ENCODE measurements at regions of chr4 and their contacts with region 1.

Region 1: DNA sequence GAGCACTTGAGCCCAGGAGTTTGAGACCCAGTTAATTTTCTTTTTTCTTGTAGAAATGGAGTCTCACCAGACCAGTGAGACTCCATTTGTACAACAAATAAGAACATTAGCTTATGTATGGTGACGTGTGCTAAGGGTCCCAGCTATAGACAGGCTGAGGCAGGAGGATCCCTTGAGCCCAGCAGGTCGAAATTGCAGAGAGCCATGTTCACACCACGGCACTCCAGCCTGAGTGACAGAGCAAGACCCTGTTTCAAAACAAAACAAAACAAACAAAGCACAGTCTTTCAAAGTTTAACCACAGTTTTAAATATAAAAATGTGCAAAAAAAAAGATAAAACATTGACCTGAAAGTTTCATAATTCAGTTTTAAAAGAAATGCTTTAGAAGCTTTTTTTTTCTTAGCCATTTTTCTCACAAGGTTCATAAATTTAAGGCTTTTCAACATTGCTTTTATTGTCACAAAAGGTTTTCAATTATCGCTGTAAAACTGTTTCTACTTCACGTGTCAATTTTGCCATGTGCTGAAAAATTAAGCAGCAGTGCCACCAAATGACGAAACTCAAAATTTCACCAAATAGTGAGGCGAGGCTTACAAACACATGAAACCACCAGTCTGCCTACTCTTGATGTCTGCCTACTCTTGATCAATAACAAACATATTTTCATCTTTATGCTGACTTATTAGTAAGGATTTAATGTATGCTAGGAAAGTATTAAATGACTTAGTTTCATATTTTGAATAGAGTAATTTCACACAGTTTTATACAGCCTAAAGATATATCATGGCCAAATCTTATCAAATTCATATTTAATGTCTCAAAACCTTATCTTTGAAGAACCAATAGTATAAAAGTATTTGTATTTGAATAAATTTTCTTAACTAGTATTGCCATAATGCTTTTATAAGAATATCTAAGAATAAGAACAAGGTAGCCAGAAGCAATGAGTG is 126.3 kb downstream of the NEK1 start:
- DNase-seq: peak; percentile 58
- ATAC-seq: no peak
- H3K4me3 Mint-ChIP-seq: no peak overlapping the region
- H3K27ac Mint-ChIP-seq: no peak overlapping the region
- H3K4me1 Mint-ChIP-seq: no peaks in the 10 kb centered on the region
- H3K27me3 Mint-ChIP-seq: no peaks in the 10 kb centered on the region

Region 2: GRCh38 chr4:169024762-169025161 is 461.3 kb before region 1 on chr4:
- CTCF ChIA-PET with region 1: interaction called, 10 read pairs
- POLR2A ChIA-PET with region 1: no interaction called
- DNase-seq: no peak
- ATAC-seq: no peak
- H3K4me3 Mint-ChIP-seq: no peak overlapping the region
- H3K27ac Mint-ChIP-seq: no peak overlapping the region
- H3K4me1 Mint-ChIP-seq: no peaks in the 10 kb centered on the region
- H3K27me3 Mint-ChIP-seq: peaks cover 4% of the 10 kb centered on the region